Activated CD4-positive, alpha-beta memory T cell treated with anti-CD3 and anti-CD28 coated beads for 36 hours (primary cell): ENCODE measurements at regions of chr22 and their contacts with region 1.

Region 1: GRCh38 chr22:30005213-30005857 is 74.9 kb upstream of the HORMAD2 start:
- DNase-seq: peak; percentile 78
- H3K4me3 Mint-ChIP-seq: no peak overlapping the region
- H3K27ac Mint-ChIP-seq: no peak overlapping the region
- H3K4me1 Mint-ChIP-seq: peaks cover 7% of the 10 kb centered on the region
- H3K27me3 Mint-ChIP-seq: no peaks in the 10 kb centered on the region

Region 2: GRCh38 chr22:29689880-29690213 is 315.5 kb before region 1 on chr22:
- CTCF ChIA-PET with region 1: interaction called, 25 read pairs
- POLR2A ChIA-PET with region 1: no interaction called
- intact Hi-C with region 1: no loop called
- DNase-seq: peak; percentile 60
- H3K4me3 Mint-ChIP-seq: no peak overlapping the region
- H3K27ac Mint-ChIP-seq: no peak overlapping the region
- H3K4me1 Mint-ChIP-seq: no peaks in the 10 kb centered on the region
- H3K27me3 Mint-ChIP-seq: no peaks in the 10 kb centered on the region

Region 3: DNA sequence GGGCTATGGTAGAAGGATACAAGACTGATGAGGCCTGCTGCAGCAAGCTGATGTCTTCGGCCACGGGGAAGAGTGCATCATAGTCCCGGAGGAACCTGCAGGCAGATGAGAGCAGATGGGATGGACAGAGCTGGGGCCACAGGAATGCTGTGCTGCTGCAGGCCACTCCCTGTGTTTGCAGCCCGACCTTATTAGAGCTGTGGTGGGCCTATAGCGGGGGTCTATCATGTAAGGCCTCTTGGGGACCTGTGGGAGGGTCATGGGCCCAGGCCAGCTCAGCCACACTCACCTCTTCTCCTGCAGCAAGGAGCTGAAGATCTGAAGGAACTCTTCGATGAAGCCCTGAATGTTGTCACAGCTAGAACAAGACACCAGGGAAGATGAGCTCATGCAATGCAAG is 199.1 kb before region 1 on chr22:
- CTCF ChIA-PET with region 1: interaction called, 12 read pairs
- POLR2A ChIA-PET with region 1: no interaction called
- intact Hi-C with region 1: no loop called
- DNase-seq: no peak
- H3K4me3 Mint-ChIP-seq: no peak overlapping the region
- H3K27ac Mint-ChIP-seq: no peak overlapping the region
- H3K4me1 Mint-ChIP-seq: no peaks in the 10 kb centered on the region
- H3K27me3 Mint-ChIP-seq: no peaks in the 10 kb centered on the region

Region 4: DNA sequence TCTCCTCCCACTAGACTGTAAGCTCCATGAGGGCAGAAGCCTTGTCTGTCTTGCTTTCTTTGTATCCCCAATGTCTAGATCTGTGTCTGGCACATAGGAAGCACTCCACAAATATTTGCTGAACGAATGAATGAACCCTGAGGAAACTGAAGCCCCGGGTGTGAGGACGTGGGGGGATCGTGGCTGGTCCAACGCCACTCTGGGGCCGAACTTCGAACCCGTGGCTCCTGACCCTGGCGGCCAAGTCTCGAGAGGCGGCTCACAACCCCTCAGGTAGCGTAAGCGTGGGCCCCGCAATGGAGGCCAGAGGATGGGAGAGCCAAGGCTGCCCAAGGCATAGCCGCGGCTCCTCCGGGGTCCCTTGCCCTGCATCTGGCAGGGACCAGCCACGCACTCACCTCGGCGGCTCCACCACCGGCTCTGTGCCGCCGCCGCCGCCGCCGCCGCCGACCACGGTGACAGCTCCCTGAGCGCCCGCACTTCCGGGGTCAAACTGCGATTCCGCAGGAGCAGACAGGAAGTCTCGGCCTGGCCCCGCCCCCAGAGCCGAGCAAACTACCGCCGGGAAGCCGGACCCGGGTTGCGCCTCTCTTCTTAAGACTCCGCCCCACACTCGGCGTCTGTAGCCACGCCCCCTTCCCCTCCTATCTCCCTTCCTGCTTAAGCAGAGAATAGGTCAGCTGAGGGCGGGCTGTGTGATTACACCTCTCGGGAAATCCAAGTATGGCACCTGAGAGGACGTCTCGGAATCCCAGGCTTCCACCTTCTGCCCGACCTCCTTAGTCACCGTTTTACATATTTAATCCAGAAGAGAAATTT is 167.3 kb before region 1 on chr22 and contains the start of gene ASCC2:
- CTCF ChIA-PET with region 1: interaction called, 15 read pairs
- POLR2A ChIA-PET with region 1: no interaction called
- intact Hi-C with region 1: loop called (anchors 2 kb)
- DNase-seq: peak; percentile 100
- H3K4me3 Mint-ChIP-seq: peak within 1 kb of the TSS; percentile 91
- H3K27ac Mint-ChIP-seq: peak within 1 kb of the TSS; percentile 95
- H3K4me1 Mint-ChIP-seq: peaks cover 38% of the 10 kb centered on the region
- H3K27me3 Mint-ChIP-seq: no peaks in the 10 kb centered on the region
- total RNA-seq, gene ASCC2: 55.5 to 56.8 TPM

Region 5: DNA sequence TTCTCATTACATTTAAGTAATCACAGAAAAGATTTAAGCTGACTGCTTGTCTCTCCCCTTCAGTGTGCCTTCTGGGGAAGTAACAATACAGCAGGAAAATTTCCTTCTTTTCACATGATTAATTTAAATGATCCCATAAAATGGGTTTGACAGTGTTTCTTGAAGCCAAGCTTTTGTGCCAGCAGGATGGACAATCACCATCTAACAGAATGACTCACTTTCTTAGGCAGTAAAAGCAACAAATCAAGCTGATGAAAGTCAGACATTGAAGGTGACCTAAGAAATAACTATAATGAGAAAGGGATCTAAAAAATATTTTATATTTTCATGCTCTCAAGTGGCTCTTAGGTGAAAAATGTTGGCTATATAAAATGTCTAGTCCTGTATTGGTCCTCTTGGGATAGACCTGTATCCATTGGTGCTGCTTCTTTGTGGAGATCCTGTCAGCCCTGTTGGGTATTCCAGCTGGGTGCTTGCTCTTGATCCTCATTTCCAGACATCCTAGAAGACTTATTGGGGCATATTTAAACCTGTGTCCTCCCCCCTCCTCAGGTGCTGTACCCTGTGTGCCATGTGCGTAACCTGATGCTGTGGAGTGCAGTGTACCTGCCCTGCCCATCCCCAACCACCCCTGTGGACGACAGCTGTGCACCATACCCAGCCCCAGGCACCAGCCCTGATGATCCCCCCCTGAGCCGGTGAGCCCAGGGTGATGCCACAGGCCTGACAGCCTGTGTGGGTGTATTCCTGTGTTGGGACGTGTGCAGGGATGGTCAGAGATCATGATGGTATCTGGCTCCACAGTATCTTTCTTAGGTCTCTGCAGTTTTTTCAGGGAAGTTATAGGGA is 12.3 kb after region 1 on chr22:
- CTCF ChIA-PET with region 1: interaction called, 10 read pairs
- POLR2A ChIA-PET with region 1: no interaction called
- intact Hi-C with region 1: no loop called
- DNase-seq: no peak
- H3K4me3 Mint-ChIP-seq: no peak overlapping the region
- H3K27ac Mint-ChIP-seq: no peak overlapping the region
- H3K4me1 Mint-ChIP-seq: peaks cover under 1% of the 10 kb centered on the region
- H3K27me3 Mint-ChIP-seq: no peaks in the 10 kb centered on the region